ENCODE measurements at regions of chr7 and their contacts with region 1.

Region 1: GRCh38 chr7:26365077-26365900 is 73.6 kb downstream of the SNX10 start:
- H3K4me3 ChIP-seq: no peak overlapping the region
- H3K27ac ChIP-seq: no peak overlapping the region
- H3K4me1 ChIP-seq: no peaks in the 10 kb centered on the region
- CTCF ChIP-seq: peak; percentile 58

Region 2: DNA sequence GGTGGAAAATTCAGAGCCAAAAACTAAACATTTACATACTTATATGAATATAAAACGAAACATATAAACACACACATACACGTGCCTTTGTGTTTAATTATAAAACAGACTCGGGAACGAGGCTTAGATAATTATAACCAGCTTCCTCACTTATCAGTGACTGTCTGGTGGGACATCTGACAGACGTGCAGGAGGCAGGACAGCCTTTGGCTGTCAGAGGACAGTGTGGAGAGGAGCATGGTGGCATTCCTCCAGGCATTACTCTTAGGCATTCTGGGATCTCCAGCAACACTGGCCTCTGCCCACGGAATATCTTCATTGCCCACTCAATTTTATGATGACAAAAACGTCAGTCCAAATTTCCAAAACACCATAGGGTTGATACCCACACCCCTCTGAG is 475.5 kb before region 1 on chr7:
- CTCF ChIA-PET with region 1: interaction called, 167 read pairs
- POLR2A ChIA-PET with region 1: interaction called, 8 read pairs
- H3K4me3 ChIP-seq: no peak overlapping the region
- H3K27ac ChIP-seq: no peak overlapping the region; the same call in 1 of the 2 replicates
- H3K4me1 ChIP-seq: peaks cover 13% of the 10 kb centered on the region
- CTCF ChIP-seq: no peak

Region 3: GRCh38 chr7:26078437-26079336 is 286.6 kb before region 1 on chr7:
- CTCF ChIA-PET with region 1: interaction called, 12 read pairs
- POLR2A ChIA-PET with region 1: no interaction called
- H3K4me3 ChIP-seq: peak overlapping the region; percentile 19; the same call in 1 of the 2 replicates
- H3K27ac ChIP-seq: no peak overlapping the region
- H3K4me1 ChIP-seq: peaks cover 23% of the 10 kb centered on the region
- CTCF ChIP-seq: peak; percentile 49; the same call in 1 of the 2 replicates

Region 4: DNA sequence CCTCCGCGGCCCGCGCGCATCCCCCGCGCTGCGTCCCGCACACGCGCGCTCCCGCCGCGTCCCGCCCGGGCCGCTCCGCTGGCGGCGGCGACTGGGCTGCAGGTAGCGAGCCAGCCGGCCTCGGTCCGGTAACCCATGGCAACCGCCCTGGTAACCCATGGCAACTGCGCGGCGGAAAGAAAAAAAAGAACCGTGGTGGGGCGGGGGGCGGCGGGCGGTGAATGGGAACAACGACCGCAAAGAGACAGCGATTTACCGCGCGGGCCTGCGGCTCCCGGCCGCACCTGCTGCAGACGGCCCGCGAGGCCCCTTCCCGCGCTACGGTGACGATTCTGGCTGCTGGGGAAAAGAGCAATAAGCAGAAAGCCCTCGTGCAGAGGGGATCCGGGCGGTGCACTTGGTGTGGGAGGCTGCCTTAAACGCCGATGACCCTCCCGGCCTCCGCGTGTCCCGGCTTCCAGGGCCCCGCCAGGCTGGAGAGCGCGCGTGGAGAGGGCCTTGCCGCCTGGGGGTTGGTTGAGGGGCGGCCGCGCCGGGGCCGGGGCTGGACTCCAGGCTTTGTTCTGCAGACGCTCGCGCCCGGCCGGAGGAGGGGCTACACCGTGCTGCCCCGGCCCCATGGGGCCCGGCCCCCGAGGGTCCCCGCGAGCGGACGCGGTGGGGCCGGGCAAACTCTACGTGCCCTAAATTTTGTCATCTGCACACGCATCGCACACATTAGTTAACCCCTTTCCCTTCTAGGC is 11.1 kb after region 1 on chr7:
- CTCF ChIA-PET with region 1: interaction called, 13 read pairs
- POLR2A ChIA-PET with region 1: interaction called, 4 read pairs
- H3K4me3 ChIP-seq: peak overlapping the region; percentile 66
- H3K27ac ChIP-seq: peak overlapping the region; percentile 99
- H3K4me1 ChIP-seq: peaks cover 31% of the 10 kb centered on the region
- CTCF ChIP-seq: no peak

Region 5: DNA sequence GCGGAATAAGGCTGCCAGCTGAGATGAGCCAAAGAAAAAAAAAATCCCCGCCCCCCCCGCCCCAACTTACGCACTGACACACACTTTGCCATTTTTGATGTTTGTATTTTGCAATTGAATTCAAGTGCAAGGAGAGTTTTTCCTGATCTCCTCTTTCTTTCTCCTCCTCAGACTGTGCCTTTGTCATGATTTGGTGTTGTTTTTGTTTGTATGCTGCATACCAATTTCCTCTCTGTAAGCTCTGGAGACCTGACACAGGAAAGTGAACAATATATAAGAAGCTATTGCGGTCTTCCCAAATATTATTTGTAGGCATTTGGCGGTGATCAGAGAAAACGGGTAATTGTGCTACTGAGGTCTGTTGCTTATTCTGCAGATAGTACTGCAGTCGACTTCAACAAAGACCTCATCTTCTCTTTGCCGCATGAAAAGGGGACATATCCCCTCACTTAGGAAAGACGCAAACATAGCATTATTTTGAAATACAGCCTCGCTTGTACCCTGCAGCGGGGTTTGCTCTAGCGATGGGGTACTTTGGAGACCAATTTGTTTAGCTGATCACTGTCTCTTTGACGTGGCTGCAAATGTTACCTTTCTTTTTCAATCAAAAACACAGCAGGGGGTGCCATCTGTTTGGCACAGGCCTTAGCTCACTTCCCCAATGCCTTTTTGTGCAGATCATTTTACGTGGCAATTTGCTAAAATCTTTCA is 292.6 kb after region 1 on chr7:
- CTCF ChIA-PET with region 1: interaction called, 110 read pairs
- POLR2A ChIA-PET with region 1: no interaction called
- H3K4me3 ChIP-seq: no peak overlapping the region
- H3K27ac ChIP-seq: peak overlapping the region; percentile 11; the same call in 1 of the 2 replicates
- H3K4me1 ChIP-seq: peaks cover 68% of the 10 kb centered on the region
- CTCF ChIP-seq: no peak

Region 6: GRCh38 chr7:26675143-26675887 is 310.0 kb after region 1 on chr7:
- CTCF ChIA-PET with region 1: interaction called, 18 read pairs
- POLR2A ChIA-PET with region 1: no interaction called
- H3K4me3 ChIP-seq: no peak overlapping the region
- H3K27ac ChIP-seq: no peak overlapping the region
- H3K4me1 ChIP-seq: peaks cover 15% of the 10 kb centered on the region
- CTCF ChIP-seq: no peak

Region 7: GRCh38 chr7:26948617-26949118 is 583.4 kb after region 1 on chr7:
- CTCF ChIA-PET with region 1: no interaction called
- POLR2A ChIA-PET with region 1: no interaction called
- H3K4me3 ChIP-seq: no peak overlapping the region
- H3K27ac ChIP-seq: no peak overlapping the region
- H3K4me1 ChIP-seq: peaks cover 4% of the 10 kb centered on the region
- CTCF ChIP-seq: no peak

Region 8: DNA sequence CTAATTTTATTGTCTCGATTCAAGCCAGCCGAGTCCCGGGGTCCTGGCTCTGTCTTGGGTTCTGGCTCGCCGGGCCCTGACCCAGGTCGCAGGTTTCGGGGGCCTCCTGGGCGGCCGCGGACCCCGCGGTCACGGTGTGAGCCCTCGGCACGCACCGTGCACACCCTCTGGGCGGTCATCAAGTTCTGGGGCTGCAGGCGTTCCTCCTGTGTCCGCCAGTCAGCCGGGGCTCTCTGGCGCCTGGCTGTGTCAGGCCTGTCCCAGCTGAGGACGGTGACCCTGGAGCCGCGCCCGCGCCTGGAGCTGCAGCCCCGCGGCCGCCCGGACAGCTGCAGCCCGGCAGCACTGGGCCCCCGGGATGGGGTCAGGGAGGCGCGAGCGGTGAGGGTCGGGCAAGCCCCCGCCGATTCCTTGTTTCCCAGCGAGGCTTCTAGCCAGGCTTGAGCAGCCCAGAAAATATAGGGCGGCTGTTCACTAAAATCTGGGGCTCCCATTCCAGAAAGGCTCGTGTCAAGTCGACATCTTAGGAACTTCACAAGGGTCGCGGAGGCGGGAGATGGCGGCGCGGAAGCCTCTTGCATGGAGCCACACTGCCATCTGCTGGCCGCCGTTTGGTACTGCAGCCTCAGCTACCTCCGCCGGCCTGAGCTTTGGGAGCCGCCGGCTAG is 795.4 kb after region 1 on chr7:
- CTCF ChIA-PET with region 1: interaction called, 18 read pairs
- POLR2A ChIA-PET with region 1: interaction called, 13 read pairs
- H3K4me3 ChIP-seq: peak overlapping the region; percentile 46
- H3K27ac ChIP-seq: peak overlapping the region; percentile 100
- H3K4me1 ChIP-seq: peaks cover 12% of the 10 kb centered on the region
- CTCF ChIP-seq: peak; percentile 88

Measured in HEK293 (cell line).